HEK293T (cell line): ENCODE measurements at regions of chr14 and their contacts with region 1.

Region 1: DNA sequence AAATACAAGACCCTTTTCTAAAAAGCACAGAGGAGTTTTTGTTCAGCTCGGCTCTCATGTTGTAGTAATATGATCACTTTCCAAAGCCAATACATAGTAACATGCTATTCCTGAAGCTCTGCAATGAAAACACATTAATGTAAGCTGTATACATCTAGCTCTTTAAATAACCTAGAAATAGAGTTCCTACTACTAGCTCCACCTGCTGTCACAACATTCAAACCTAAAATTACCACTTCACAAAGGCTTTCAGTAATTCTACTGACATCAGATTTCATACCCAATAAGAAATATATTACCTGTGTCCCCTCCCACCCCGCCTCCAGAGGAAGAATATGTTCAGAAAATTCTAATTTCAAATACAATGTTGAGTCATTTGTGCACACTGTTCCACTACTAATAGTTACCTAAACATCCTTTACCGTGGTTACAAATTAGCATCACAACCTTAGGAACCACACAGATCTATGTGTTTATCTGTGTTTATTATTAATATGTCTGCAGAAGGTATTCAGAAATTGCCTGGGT is 17.8 kb downstream of the EFCAB11 start:
- DNase-seq: no peak

Region 2: GRCh38 chr14:89855961-89856656 is 80.6 kb before region 1 on chr14:
- CTCF ChIA-PET with region 1: no interaction called
- POLR2A ChIA-PET with region 1: no interaction called
- DNase-seq: no peak

Region 3: DNA sequence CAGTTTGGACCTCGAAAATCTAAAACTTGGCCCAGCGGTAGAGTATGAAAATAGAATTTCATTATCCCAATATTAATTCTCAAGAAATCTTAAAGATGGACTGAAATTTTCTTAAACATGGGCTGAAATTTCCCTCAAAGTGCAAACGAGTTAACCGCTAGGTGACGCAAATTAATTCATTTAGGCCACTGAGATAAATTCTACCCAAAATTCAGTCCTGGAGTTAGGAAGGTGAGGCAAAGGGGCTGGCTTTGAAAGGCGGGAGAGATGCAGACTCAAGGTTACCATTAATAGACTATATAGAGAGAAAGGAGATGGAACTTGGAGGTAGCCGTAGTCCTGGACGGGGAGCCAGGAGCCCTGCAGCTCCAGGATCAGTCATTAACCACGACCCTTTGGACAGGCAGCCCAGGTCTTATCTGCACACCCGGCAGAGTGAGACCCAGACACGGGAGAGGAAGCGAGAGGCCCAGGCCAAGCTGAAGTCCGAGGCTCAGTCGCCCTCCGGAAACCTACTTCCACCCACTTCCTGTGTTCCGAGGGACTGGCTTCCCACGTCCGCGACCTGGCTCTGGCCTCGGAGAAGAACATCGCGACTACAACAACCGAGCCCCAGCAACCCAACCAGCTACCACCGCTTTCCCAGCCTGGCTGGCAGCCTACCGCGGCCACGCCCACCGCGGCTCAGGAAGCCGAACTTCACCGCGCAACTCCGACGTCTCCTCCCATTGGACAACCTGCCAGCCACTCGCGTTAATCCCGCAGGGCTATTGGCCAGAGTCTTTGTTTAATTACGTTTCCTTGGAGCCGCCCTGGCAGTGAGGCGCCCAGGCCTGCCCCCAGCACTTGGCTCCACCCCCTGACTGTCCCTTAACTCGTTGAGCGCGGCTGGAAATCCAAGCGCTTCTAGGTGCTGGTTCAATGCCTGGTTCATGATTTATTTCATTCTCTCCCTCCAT is 17.6 kb after region 1 on chr14 and contains the start of gene EFCAB11:
- CTCF ChIA-PET with region 1: interaction called, 35 read pairs
- POLR2A ChIA-PET with region 1: interaction called, 8 read pairs
- DNase-seq: peak; percentile 92